Activated CD4-positive, alpha-beta T cell treated with anti-CD3 and anti-CD28 coated beads for 36 hours (primary cell): ENCODE measurements at regions of chr6 and their contacts with region 1.

Region 1: DNA sequence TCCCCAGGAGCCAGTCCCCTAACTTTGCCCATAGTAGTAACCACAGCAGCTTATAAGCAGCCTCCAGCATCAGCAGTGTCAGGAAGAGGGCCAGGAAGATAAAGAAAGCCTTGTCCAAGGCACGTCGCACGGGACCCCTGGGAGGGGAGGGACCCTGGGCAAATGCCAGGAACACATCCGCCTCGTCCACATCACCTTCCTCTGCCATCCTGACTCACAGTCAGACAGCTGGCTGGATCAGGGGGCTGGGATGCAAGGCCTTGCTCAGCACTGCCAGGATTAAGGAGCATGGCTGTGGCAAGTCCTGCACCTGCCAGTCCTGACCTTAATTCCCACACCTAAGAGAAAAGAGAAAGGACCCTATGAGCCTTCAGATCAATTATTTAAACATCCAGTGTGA is 11.5 kb upstream of the ZBTB22 start:
- DNase-seq: no peak
- ATAC-seq: no peak
- H3K4me3 Mint-ChIP-seq: no peak overlapping the region
- H3K27ac Mint-ChIP-seq: no peak overlapping the region
- H3K4me1 Mint-ChIP-seq: peaks cover 12% of the 10 kb centered on the region
- H3K27me3 Mint-ChIP-seq: no peaks in the 10 kb centered on the region

Region 2: DNA sequence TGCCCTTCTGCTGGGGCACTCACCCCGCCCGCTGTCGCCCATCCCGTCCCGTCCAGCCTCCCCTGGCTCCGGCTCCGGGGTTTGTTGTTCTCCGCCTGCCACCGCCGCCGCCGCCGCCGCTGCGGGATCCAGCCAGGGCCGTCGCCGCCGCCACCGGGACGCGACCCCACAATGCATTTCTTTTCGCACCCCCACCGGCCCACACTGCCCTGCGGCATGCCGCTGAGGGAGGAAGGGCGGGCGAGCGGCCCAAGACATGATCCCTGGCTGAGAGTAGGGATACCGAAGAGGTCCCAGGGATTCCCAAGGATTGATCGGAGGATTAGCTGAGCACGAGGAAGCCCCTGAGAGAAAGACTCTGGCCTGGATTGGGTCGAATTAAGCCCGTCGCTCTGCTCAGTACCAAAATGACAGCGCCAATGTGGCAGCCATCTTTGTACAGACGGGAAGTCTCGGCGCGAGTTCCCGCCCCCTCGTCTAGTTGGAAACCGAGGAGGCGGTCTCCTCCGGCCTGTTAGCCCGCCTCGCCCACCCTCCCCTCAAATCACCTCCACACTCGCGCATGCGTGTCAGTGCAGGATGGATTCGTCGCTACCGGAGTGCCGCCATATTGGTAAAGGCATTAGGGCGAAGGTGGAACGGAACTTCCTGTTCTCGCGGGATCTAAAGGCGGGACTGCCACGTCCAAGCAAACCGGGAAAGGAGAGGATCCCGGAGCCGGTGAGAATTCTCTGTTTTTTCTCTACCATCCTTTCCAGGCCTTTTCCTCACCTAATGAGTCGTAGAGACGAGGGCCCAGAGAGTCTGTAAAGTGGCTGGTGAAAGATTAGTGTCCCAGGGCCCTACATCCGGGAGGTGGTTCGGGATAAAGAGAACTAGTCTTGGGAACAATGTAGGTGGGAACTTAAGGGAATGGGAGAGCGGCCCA is 128.6 kb before region 1 on chr6 and contains the starts of genes RXRB and SLC39A7:
- CTCF ChIA-PET with region 1: no interaction called
- POLR2A ChIA-PET with region 1: no interaction called
- intact Hi-C with region 1: no loop called
- DNase-seq: peak; percentile 100
- ATAC-seq: peak; percentile 64
- H3K4me3 Mint-ChIP-seq: peak within 1 kb of the TSS; percentile 100
- H3K27ac Mint-ChIP-seq: peak within 1 kb of the TSS; percentile 99
- H3K4me1 Mint-ChIP-seq: peaks cover 64% of the 10 kb centered on the region
- H3K27me3 Mint-ChIP-seq: no peaks in the 10 kb centered on the region
- total RNA-seq, gene RXRB: 41.0 to 45.4 TPM
- total RNA-seq, gene SLC39A7: 33.0 to 41.8 TPM

Region 3: GRCh38 chr6:33344701-33345697 is 15.9 kb after region 1 on chr6:
- CTCF ChIA-PET with region 1: interaction called, 13 read pairs
- POLR2A ChIA-PET with region 1: interaction called, 6 read pairs
- intact Hi-C with region 1: no loop called
- DNase-seq: peak; percentile 79
- ATAC-seq: peak; percentile 54
- H3K4me3 Mint-ChIP-seq: peak overlapping the region; percentile 56
- H3K27ac Mint-ChIP-seq: peak overlapping the region; percentile 78
- H3K4me1 Mint-ChIP-seq: peaks cover 21% of the 10 kb centered on the region
- H3K27me3 Mint-ChIP-seq: no peaks in the 10 kb centered on the region